Activated B cell treated with CpG ODN at 0.5 μM for 24 hours (primary cell): ENCODE measurements at regions of chr3 and their contacts with region 1.

Region 1: GRCh38 chr3:33063651-33064051 is 33.3 kb downstream of the GLB1 start:
- DNase-seq: no peak
- ATAC-seq: peak; percentile 78
- H3K4me3 Mint-ChIP-seq: peak overlapping the region; percentile 8
- H3K27ac Mint-ChIP-seq: peak overlapping the region; percentile 84
- H3K4me1 Mint-ChIP-seq: peaks cover 52% of the 10 kb centered on the region
- H3K27me3 Mint-ChIP-seq: no peaks in the 10 kb centered on the region
- CTCF ChIP-seq: no peak

Region 2: DNA sequence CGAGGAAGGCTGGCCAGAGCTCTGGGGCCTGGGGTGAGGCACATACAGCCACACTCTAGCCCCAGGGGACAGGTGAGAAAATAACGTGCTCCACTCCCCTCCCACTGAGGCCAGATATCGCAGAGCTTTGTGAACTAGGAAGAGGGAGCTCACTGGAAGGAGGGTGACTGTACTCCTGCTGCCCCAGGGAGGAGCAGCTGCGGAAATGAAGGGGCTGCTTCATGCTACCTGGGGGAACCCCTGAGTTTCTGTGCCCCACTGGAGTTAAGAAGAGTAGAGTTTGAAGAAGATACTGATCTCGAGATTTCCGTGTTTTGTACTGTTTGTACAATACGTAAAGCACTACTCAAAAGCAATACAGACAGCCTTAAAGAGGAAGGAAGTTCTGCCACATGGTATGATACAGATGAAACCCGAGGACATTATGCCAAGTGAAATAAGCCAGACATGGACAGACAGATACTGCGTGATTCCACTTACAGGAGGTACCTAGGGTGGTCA is 605.6 kb before region 1 on chr3:
- CTCF ChIA-PET with region 1: no interaction called
- POLR2A ChIA-PET with region 1: no interaction called
- intact Hi-C with region 1: no loop called
- DNase-seq: no peak
- ATAC-seq: peak; percentile 68
- H3K4me3 Mint-ChIP-seq: peak overlapping the region; percentile 78
- H3K27ac Mint-ChIP-seq: peak overlapping the region; percentile 98
- H3K4me1 Mint-ChIP-seq: peaks cover 64% of the 10 kb centered on the region
- H3K27me3 Mint-ChIP-seq: no peaks in the 10 kb centered on the region
- CTCF ChIP-seq: no peak

Region 3: GRCh38 chr3:32947789-32948238 is 115.8 kb before region 1 on chr3:
- CTCF ChIA-PET with region 1: interaction called, 5 read pairs
- POLR2A ChIA-PET with region 1: no interaction called
- intact Hi-C with region 1: loop called (anchors 1 kb)
- DNase-seq: peak; percentile 67
- ATAC-seq: peak; percentile 86
- H3K4me3 Mint-ChIP-seq: no peak overlapping the region
- H3K27ac Mint-ChIP-seq: no peak overlapping the region
- H3K4me1 Mint-ChIP-seq: peaks cover 9% of the 10 kb centered on the region
- H3K27me3 Mint-ChIP-seq: no peaks in the 10 kb centered on the region
- CTCF ChIP-seq: no peak

Region 4: DNA sequence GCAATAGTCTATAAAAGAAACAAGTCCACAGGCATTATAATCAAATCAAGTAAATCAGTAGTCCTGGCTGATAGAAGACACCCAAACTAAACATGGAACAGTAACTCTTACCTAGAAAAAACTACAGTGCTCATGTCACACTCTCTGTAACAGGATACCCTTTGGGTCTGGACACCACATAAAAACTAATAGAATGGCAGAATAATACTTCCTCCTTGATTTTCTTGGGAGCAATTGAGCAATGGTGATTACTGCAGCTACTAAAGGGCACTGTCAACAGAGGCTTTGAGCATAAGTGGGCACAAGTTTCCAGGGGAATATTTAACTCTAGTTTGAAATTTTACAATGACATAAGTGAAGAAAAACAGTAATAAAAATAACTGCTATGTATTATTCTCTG is 26.2 kb before region 1 on chr3:
- CTCF ChIA-PET with region 1: no interaction called
- POLR2A ChIA-PET with region 1: no interaction called
- intact Hi-C with region 1: no loop called
- DNase-seq: no peak
- ATAC-seq: no peak
- H3K4me3 Mint-ChIP-seq: no peak overlapping the region
- H3K27ac Mint-ChIP-seq: no peak overlapping the region
- H3K4me1 Mint-ChIP-seq: peaks cover 5% of the 10 kb centered on the region
- H3K27me3 Mint-ChIP-seq: no peaks in the 10 kb centered on the region
- CTCF ChIP-seq: no peak

Region 5: GRCh38 chr3:33047842-33048834 is 15.5 kb before region 1 on chr3:
- CTCF ChIA-PET with region 1: no interaction called
- POLR2A ChIA-PET with region 1: interaction called, 10 read pairs
- intact Hi-C with region 1: loop called (anchors 1 kb)
- DNase-seq: no peak
- ATAC-seq: peak; percentile 74
- H3K4me3 Mint-ChIP-seq: peak overlapping the region; percentile 49
- H3K27ac Mint-ChIP-seq: peak overlapping the region; percentile 91
- H3K4me1 Mint-ChIP-seq: peaks cover 82% of the 10 kb centered on the region
- H3K27me3 Mint-ChIP-seq: no peaks in the 10 kb centered on the region
- CTCF ChIP-seq: no peak

Region 6: GRCh38 chr3:33096093-33096868 is 32.6 kb after region 1 on chr3:
- CTCF ChIA-PET with region 1: no interaction called
- POLR2A ChIA-PET with region 1: no interaction called
- intact Hi-C with region 1: loop called (anchors 2 kb)
- DNase-seq: peak; percentile 58
- ATAC-seq: peak; percentile 68
- H3K4me3 Mint-ChIP-seq: peak overlapping the region; percentile 98
- H3K27ac Mint-ChIP-seq: peak overlapping the region; percentile 94
- H3K4me1 Mint-ChIP-seq: peaks cover 41% of the 10 kb centered on the region
- H3K27me3 Mint-ChIP-seq: no peaks in the 10 kb centered on the region
- CTCF ChIP-seq: no peak